GM12878 (cell line): ENCODE measurements at regions of chr2 and their contacts with region 1.

Region 1: GRCh38 chr2:179440642-179441251 is 176.1 kb upstream of the SESTD1 start:
- DNase-seq: no peak
- ATAC-seq: peak; percentile 79
- H3K4me3 ChIP-seq: no peak overlapping the region
- H3K27ac ChIP-seq: no peak overlapping the region
- H3K4me1 ChIP-seq: no peaks in the 10 kb centered on the region
- H3K27me3 ChIP-seq: peaks cover 0 to 3% of the 10 kb centered on the region in 2 experiments; a peak in 1 of 4 replicates
- CTCF ChIP-seq: peak; percentile 47 to 65 (median 48); a peak in 5 of 6 replicates
- EP300 ChIP-seq: no peak
- POLR2A ChIP-seq: no peak
- RAD21 ChIP-seq: peak; percentile 69

Region 2: DNA sequence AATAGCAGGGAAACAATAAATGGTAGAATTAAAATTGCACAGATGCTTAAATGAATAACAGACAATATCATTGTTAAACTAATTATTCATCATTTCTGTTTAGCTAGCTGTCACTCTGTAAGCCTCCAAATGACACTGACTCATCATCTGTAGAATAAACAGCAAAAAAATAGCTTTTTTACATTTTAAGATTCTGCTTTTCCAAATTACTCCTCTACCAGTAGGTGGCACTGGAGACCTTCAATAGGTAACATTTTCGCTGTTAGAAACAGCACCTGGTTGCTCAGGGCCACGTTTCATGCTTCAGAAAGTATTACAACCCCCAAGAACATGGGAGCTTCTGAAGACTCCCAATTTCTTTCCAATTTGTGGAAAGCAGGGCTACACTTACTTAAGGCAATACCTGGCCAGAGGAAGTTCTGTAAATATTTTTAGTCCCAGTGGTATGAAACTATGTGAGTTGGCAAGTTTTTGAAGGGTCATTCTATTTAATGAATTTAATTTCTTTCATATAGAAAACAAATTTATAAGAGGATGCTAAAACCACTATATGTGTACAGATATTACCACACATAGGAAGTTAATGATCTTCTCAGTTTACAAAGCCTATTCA is 678.9 kb before region 1 on chr2:
- CTCF ChIA-PET with region 1: interaction called, 5 read pairs
- POLR2A ChIA-PET with region 1: no interaction called
- RAD21 ChIA-PET with region 1: interaction called, 3 read pairs
- SMC1A ChIA-PET with region 1: no interaction called
- in situ Hi-C with region 1: loop called (anchors 10 kb)
- intact Hi-C with region 1: loop called (anchors 5 kb)
- DNase-seq: peak; percentile 12
- ATAC-seq: peak; percentile 83
- H3K4me3 ChIP-seq: no peak overlapping the region
- H3K27ac ChIP-seq: no peak overlapping the region
- H3K4me1 ChIP-seq: no peaks in the 10 kb centered on the region
- H3K27me3 ChIP-seq: no peaks in the 10 kb centered on the region
- CTCF ChIP-seq: peak; percentile 68 to 79 (median 69)
- EP300 ChIP-seq: no peak
- POLR2A ChIP-seq: no peak
- RAD21 ChIP-seq: peak; percentile 91

Region 3: GRCh38 chr2:178796079-178796677 is 644.6 kb before region 1 on chr2:
- CTCF ChIA-PET with region 1: interaction called, 5 read pairs
- POLR2A ChIA-PET with region 1: no interaction called
- RAD21 ChIA-PET with region 1: no interaction called
- SMC1A ChIA-PET with region 1: interaction called, 5 read pairs
- in situ Hi-C with region 1: no loop called
- intact Hi-C with region 1: loop called (anchors 2 kb)
- DNase-seq: no peak
- ATAC-seq: peak; percentile 46; the same call in 1 of the 3 replicates
- H3K4me3 ChIP-seq: no peak overlapping the region
- H3K27ac ChIP-seq: no peak overlapping the region
- H3K4me1 ChIP-seq: no peaks in the 10 kb centered on the region
- H3K27me3 ChIP-seq: no peaks in the 10 kb centered on the region
- CTCF ChIP-seq: peak; percentile 29 to 57 (median 44); a peak in 3 of 6 replicates
- EP300 ChIP-seq: no peak
- POLR2A ChIP-seq: no peak
- RAD21 ChIP-seq: peak; percentile 62

Region 4: GRCh38 chr2:178891265-178891958 is 549.3 kb before region 1 on chr2:
- CTCF ChIA-PET with region 1: no interaction called
- POLR2A ChIA-PET with region 1: no interaction called
- RAD21 ChIA-PET with region 1: no interaction called
- SMC1A ChIA-PET with region 1: no interaction called
- in situ Hi-C with region 1: no loop called
- intact Hi-C with region 1: loop called (anchors 5 kb)
- DNase-seq: peak; percentile 33
- ATAC-seq: peak; percentile 94
- H3K4me3 ChIP-seq: no peak overlapping the region
- H3K27ac ChIP-seq: no peak overlapping the region
- H3K4me1 ChIP-seq: no peaks in the 10 kb centered on the region
- H3K27me3 ChIP-seq: no peaks in the 10 kb centered on the region
- CTCF ChIP-seq: peak; percentile 87 to 91 (median 90)
- EP300 ChIP-seq: no peak
- POLR2A ChIP-seq: no peak
- RAD21 ChIP-seq: peak; percentile 89

Region 5: DNA sequence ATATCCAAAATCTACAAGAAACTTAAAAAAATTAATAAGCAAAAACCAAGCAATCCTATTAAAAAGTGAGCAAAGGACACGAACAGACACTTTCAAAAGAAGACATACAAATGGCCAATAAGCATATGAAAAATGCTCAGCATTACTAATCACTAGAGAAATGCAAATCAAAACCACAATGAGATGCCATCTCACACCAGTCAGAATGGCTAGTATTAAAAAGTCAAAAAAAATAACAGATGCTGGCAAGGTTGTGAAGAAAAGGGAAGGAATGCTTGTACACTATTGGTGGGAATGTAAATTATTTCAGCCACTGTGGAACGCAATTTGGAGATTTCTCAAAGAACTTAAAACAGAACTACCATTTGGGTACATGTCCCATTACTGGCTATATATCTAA is 47.3 kb before region 1 on chr2:
- CTCF ChIA-PET with region 1: no interaction called
- POLR2A ChIA-PET with region 1: no interaction called
- RAD21 ChIA-PET with region 1: no interaction called
- SMC1A ChIA-PET with region 1: no interaction called
- in situ Hi-C with region 1: no loop called
- intact Hi-C with region 1: no loop called
- DNase-seq: no peak
- ATAC-seq: no peak
- H3K4me3 ChIP-seq: no peak overlapping the region
- H3K27ac ChIP-seq: no peak overlapping the region
- H3K4me1 ChIP-seq: no peaks in the 10 kb centered on the region
- H3K27me3 ChIP-seq: no peaks in the 10 kb centered on the region
- CTCF ChIP-seq: no peak
- EP300 ChIP-seq: no peak
- POLR2A ChIP-seq: no peak
- RAD21 ChIP-seq: no peak

Region 6: DNA sequence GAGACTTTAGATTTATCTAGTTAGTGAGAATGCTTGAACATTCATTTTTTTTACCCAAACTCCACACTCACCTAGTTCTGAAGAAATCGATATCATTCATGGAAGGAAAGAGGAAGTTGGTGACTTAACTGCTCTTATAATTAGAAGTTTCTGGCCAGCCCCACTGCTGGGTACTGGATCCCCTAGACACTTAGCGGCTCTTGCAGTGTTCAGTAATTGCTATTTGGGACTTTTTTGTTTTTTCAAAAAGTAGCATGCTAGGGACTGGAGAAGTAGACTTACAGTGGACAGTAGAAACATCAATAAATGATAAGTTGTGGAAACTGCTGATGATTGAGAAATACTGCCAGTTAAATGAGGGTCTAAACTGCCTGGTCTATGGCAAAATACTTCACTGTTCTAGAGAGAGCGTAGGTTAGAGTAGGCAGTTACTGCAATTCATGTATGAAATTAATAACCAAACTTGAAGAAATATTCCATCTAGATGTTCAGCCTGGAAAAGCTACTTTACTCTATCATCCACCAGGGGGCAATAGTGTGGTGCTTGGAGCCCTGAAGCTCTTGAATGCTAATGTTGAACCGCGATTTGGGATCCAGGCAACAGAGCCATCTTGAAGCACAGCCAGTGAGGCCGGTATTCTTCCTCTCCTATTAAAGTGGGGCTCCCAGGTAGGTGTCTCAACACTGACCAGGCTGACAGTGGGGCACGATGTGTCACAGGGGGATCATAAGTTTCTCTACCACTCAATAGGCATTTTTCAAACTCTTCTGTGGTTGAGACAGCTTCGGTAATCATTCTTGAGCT is 30.0 kb before region 1 on chr2:
- CTCF ChIA-PET with region 1: interaction called, 11 read pairs
- POLR2A ChIA-PET with region 1: no interaction called
- RAD21 ChIA-PET with region 1: interaction called, 5 read pairs
- SMC1A ChIA-PET with region 1: interaction called, 3 read pairs
- in situ Hi-C with region 1: no loop called
- intact Hi-C with region 1: no loop called
- DNase-seq: no peak
- ATAC-seq: peak; percentile 92
- H3K4me3 ChIP-seq: no peak overlapping the region
- H3K27ac ChIP-seq: no peak overlapping the region
- H3K4me1 ChIP-seq: no peaks in the 10 kb centered on the region
- H3K27me3 ChIP-seq: no peaks in the 10 kb centered on the region
- CTCF ChIP-seq: peak; percentile 63 to 73 (median 71)
- EP300 ChIP-seq: no peak
- POLR2A ChIP-seq: no peak
- RAD21 ChIP-seq: peak; percentile 62

Region 7: DNA sequence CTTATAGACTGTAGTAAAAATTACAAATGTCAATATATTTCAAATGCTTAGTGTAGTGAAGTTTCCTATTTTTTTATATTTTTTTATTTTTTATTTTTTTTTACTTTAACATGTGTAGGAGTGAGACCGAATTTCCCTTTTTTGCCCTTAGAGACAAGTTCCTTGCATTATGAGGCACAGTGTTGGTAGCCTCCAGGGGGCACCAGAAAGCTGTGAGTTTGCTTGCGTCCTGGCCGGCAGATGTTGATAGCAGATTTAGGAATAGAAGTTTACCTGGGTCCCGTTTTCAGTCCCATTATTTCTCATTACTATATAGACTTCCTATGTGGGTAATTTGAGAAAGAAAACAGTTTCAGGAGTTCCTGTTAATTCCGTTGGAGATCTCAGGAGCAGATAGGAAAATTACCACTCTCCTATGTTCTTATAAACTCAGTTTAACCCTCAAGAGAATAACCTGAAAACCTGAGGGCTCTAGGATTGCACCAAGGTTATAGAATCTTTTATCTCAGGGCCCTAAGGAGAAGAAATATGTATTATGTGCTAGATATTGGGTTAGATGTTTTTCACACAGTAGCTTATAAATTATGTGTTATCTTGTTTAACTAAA is 18.6 kb before region 1 on chr2:
- CTCF ChIA-PET with region 1: interaction called, 34 read pairs
- POLR2A ChIA-PET with region 1: no interaction called
- RAD21 ChIA-PET with region 1: interaction called, 5 read pairs
- SMC1A ChIA-PET with region 1: interaction called, 8 read pairs
- in situ Hi-C with region 1: no loop called
- intact Hi-C with region 1: no loop called
- DNase-seq: no peak
- ATAC-seq: peak; percentile 89
- H3K4me3 ChIP-seq: no peak overlapping the region
- H3K27ac ChIP-seq: no peak overlapping the region
- H3K4me1 ChIP-seq: no peaks in the 10 kb centered on the region
- H3K27me3 ChIP-seq: no peaks in the 10 kb centered on the region; a peak in 1 of 4 replicates
- CTCF ChIP-seq: peak; percentile 66 to 77 (median 69)
- EP300 ChIP-seq: no peak
- POLR2A ChIP-seq: no peak
- RAD21 ChIP-seq: peak; percentile 76

Region 8: GRCh38 chr2:179454443-179455171 is 13.9 kb after region 1 on chr2:
- CTCF ChIA-PET with region 1: interaction called, 12 read pairs
- POLR2A ChIA-PET with region 1: no interaction called
- RAD21 ChIA-PET with region 1: interaction called, 3 read pairs
- SMC1A ChIA-PET with region 1: interaction called, 3 read pairs
- in situ Hi-C with region 1: no loop called
- intact Hi-C with region 1: no loop called
- DNase-seq: no peak
- ATAC-seq: no peak
- H3K4me3 ChIP-seq: no peak overlapping the region
- H3K27ac ChIP-seq: no peak overlapping the region
- H3K4me1 ChIP-seq: no peaks in the 10 kb centered on the region
- H3K27me3 ChIP-seq: no peaks in the 10 kb centered on the region; a peak in 1 of 4 replicates
- CTCF ChIP-seq: no peak
- EP300 ChIP-seq: no peak
- POLR2A ChIP-seq: no peak
- RAD21 ChIP-seq: no peak